ENCODE measurements at regions of chr7 and their contacts with region 1.

Region 1: DNA sequence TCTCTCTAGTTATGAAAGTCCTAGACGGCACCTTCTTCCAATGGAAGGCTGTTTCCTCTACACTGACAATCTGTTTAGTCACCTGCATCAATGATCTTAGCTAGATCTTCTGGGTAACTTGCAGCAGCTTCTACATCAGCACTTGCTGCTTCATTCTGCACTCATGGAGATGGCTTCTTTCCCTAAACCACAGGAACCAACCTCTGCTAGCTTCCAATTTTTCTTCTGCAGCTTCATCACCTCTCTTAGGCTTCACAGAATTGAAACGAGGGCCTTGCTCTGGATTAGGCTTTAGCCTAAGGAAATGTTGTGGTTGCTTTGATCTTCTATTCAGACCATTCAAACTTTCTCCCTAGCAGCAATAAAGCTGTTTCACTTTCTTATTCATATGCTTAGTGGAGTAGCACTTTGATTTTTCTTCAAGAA is 24.6 kb downstream of the NAMPT start:
- DNase-seq: no peak
- H3K4me3 Mint-ChIP-seq: no peak overlapping the region
- H3K27ac Mint-ChIP-seq: peak overlapping the region; percentile 62
- H3K4me1 Mint-ChIP-seq: peaks cover 25% of the 10 kb centered on the region
- H3K27me3 Mint-ChIP-seq: no peaks in the 10 kb centered on the region
- CTCF ChIP-seq: no peak

Region 2: DNA sequence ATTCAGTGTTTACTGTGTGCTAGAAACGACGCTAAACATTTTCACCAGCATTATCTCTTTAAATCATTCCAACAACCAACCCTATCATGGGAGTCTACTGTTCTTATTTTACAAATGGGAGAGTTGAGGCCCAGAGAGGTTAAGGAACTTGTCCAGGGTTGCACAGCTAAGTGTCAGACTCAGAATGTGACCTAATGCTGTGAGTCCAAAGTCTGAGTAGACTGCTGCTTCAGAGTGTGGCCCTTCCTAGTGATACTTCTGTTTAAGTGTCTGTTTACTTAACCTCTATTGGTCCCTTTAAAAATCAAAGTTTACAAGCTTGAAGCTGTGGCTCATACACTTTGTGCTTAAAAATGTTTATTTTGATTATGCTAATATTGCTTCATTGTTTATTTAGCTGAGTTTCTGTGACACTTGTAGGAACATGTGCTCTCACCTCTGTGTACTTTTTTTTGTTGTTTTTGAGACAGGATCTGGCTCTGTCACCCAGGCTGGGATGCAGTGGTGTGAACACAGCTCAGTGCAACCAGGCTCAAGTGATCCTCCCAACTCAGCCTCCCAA is 63.6 kb before region 1 on chr7:
- CTCF ChIA-PET with region 1: no interaction called
- intact Hi-C with region 1: loop called (anchors 5 kb)
- DNase-seq: no peak
- H3K4me3 Mint-ChIP-seq: no peak overlapping the region
- H3K27ac Mint-ChIP-seq: no peak overlapping the region
- H3K4me1 Mint-ChIP-seq: no peaks in the 10 kb centered on the region
- H3K27me3 Mint-ChIP-seq: no peaks in the 10 kb centered on the region
- CTCF ChIP-seq: no peak

Region 3: GRCh38 chr7:106273009-106273668 is 13.0 kb after region 1 on chr7:
- CTCF ChIA-PET with region 1: no interaction called
- intact Hi-C with region 1: loop called (anchors 2 kb)
- DNase-seq: no peak
- H3K4me3 Mint-ChIP-seq: no peak overlapping the region
- H3K27ac Mint-ChIP-seq: peak overlapping the region; percentile 41
- H3K4me1 Mint-ChIP-seq: peaks cover 30% of the 10 kb centered on the region
- H3K27me3 Mint-ChIP-seq: no peaks in the 10 kb centered on the region
- CTCF ChIP-seq: no peak

Region 4: GRCh38 chr7:106285855-106286492 is 25.8 kb after region 1 on chr7:
- CTCF ChIA-PET with region 1: no interaction called
- intact Hi-C with region 1: no loop called
- DNase-seq: no peak
- H3K4me3 Mint-ChIP-seq: peak overlapping the region; percentile 92
- H3K27ac Mint-ChIP-seq: peak overlapping the region; percentile 92
- H3K4me1 Mint-ChIP-seq: peaks cover 19% of the 10 kb centered on the region
- H3K27me3 Mint-ChIP-seq: no peaks in the 10 kb centered on the region
- CTCF ChIP-seq: no peak